ENCODE measurements at regions of chr15 and their contacts with region 1.

Region 1: GRCh38 chr15:56869573-56869972 is 48.9 kb upstream of the TCF12 start:
- DNase-seq: peak in 1 of 2 experiments; percentile 61
- H3K4me3 ChIP-seq: no peak overlapping the region
- H3K27ac ChIP-seq: no peak overlapping the region
- H3K4me1 ChIP-seq: peaks cover 0 to 6% (median 0%) of the 10 kb centered on the region in 4 experiments; a peak in 3 of 7 replicates
- H3K27me3 ChIP-seq: no peaks in the 10 kb centered on the region
- CTCF ChIP-seq: peak; percentile 40 to 66 (median 66)
- EP300 ChIP-seq: no peak
- POLR2A ChIP-seq: no peak
- RAD21 ChIP-seq: peak; percentile 86 to 91

Region 2: DNA sequence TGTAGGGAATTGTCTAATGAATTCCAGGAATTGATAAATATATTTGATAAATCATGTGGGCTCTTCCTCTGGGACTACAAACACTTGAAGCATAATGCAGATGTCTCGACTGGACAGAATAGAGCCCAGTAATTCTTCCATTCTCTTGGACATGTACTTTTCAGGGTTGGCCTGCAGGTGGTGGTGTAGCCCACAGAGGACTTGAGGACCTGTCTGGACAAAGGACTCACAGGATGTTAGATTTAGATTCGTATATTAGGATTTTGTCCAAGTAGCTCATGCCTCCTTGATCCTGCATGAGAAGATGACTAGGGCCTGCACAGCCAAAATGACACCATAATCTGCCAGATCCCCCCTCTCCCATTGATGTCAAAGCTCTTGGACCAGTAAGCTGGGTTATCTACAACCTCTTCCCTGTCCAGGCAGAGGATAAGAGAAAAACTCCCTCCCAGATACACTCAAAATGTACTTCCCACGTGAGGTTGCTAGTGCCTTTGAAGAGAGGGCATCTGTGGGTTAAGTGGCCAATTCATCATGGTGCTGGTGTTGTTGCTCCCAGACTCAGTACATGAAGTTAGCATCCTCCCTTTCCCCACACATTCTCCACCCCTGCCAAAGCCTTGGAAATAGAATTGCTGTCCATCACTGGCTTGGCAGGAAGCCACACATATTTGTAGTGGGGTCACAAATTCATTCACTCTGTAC is 47.7 kb before region 1 on chr15:
- CTCF ChIA-PET with region 1: interaction called, 46 read pairs
- POLR2A ChIA-PET with region 1: no interaction called
- DNase-seq: peak in 1 of 2 experiments; percentile 59
- H3K4me3 ChIP-seq: no peak overlapping the region
- H3K27ac ChIP-seq: no peak overlapping the region
- H3K4me1 ChIP-seq: no peaks in the 10 kb centered on the region
- H3K27me3 ChIP-seq: no peaks in the 10 kb centered on the region
- CTCF ChIP-seq: peak; percentile 59 to 79 (median 66)
- EP300 ChIP-seq: no peak
- POLR2A ChIP-seq: no peak
- RAD21 ChIP-seq: peak; percentile 80 to 87

Region 3: GRCh38 chr15:56856934-56857333 is 12.6 kb before region 1 on chr15:
- CTCF ChIA-PET with region 1: interaction called, 12 read pairs
- POLR2A ChIA-PET with region 1: interaction called, 4 read pairs
- DNase-seq: no peak
- H3K4me3 ChIP-seq: no peak overlapping the region
- H3K27ac ChIP-seq: no peak overlapping the region
- H3K4me1 ChIP-seq: no peaks in the 10 kb centered on the region
- H3K27me3 ChIP-seq: no peaks in the 10 kb centered on the region
- CTCF ChIP-seq: no peak
- EP300 ChIP-seq: no peak
- POLR2A ChIP-seq: no peak
- RAD21 ChIP-seq: no peak